ENCODE measurements at regions of chr4 and their contacts with region 1.

Region 1: GRCh38 chr4:185471235-185472102 is at the start of gene CCDC110:
- DNase-seq: peak; percentile 94
- H3K4me3 Mint-ChIP-seq: peak within 1 kb of the TSS; percentile 77
- H3K27ac Mint-ChIP-seq: no peak within 1 kb of the TSS
- H3K4me1 Mint-ChIP-seq: peaks cover 4% of the 10 kb centered on the region
- H3K27me3 Mint-ChIP-seq: peaks cover 9% of the 10 kb centered on the region
- total RNA-seq, gene CCDC110: 0.10 to 0.26 TPM

Region 2: GRCh38 chr4:185209031-185209851 is 262.2 kb before region 1 on chr4 and contains the start of gene SNX25:
- CTCF ChIA-PET with region 1: interaction called, 3 read pairs
- POLR2A ChIA-PET with region 1: no interaction called
- intact Hi-C with region 1: loop called (anchors 1 kb)
- DNase-seq: peak; percentile 91
- H3K4me3 Mint-ChIP-seq: peak within 1 kb of the TSS; percentile 88
- H3K27ac Mint-ChIP-seq: peak within 1 kb of the TSS; percentile 72
- H3K4me1 Mint-ChIP-seq: peaks cover 46% of the 10 kb centered on the region
- H3K27me3 Mint-ChIP-seq: no peaks in the 10 kb centered on the region
- total RNA-seq, gene SNX25: 18.9 to 21.6 TPM

Region 3: GRCh38 chr4:185254434-185254833 is 217.0 kb before region 1 on chr4:
- CTCF ChIA-PET with region 1: no interaction called
- POLR2A ChIA-PET with region 1: no interaction called
- intact Hi-C with region 1: loop called (anchors 5 kb)
- DNase-seq: no peak
- H3K4me3 Mint-ChIP-seq: peak overlapping the region; percentile 20
- H3K27ac Mint-ChIP-seq: peak overlapping the region; percentile 61
- H3K4me1 Mint-ChIP-seq: peaks cover 59% of the 10 kb centered on the region
- H3K27me3 Mint-ChIP-seq: no peaks in the 10 kb centered on the region

Region 4: DNA sequence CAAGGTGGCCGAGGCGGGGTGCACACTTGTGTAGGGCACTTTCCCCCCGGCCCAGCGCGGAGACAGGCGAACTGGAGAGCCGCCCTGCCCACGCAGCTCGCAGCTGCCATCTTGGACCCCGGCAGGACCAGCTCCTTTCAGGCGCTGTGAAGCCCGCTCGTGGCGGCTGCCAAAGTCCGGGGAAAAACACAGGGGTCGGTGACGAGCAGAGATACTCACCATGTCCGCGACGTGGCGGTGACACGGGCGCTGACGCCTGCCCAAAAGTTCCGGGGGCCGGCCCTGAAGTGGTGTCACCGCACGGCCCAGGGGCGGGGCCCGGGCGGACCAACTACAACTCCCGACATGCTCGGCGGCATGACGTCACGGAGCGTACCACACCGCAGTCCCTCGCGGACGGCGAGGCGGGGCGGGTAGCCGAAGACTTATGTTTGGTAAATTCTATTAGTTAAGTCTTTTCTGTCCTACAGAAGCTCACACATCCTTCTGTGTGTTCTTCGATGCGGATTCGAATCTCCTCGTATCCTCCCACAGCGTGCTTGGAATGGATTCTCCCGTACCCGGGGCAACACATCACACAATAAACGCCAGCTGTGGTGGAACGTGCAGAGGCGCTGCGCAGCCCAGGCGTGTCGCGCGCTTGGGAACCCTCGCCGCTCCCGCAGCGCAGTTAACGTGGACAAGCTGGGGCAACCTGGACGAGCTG is 45.7 kb before region 1 on chr4 and contains the start of gene UFSP2:
- CTCF ChIA-PET with region 1: no interaction called
- POLR2A ChIA-PET with region 1: interaction called, 3 read pairs
- intact Hi-C with region 1: loop called (anchors 1 kb)
- DNase-seq: peak; percentile 90
- H3K4me3 Mint-ChIP-seq: peak within 1 kb of the TSS; percentile 83
- H3K27ac Mint-ChIP-seq: peak within 1 kb of the TSS; percentile 97
- H3K4me1 Mint-ChIP-seq: peaks cover 23% of the 10 kb centered on the region
- H3K27me3 Mint-ChIP-seq: no peaks in the 10 kb centered on the region
- total RNA-seq, gene UFSP2: 28.3 to 33.0 TPM

Region 5: GRCh38 chr4:185504098-185505047 is 32.9 kb after region 1 on chr4:
- CTCF ChIA-PET with region 1: no interaction called
- POLR2A ChIA-PET with region 1: no interaction called
- intact Hi-C with region 1: no loop called
- DNase-seq: no peak
- H3K4me3 Mint-ChIP-seq: no peak overlapping the region
- H3K27ac Mint-ChIP-seq: no peak overlapping the region
- H3K4me1 Mint-ChIP-seq: no peaks in the 10 kb centered on the region
- H3K27me3 Mint-ChIP-seq: peaks cover 14% of the 10 kb centered on the region

Region 6: DNA sequence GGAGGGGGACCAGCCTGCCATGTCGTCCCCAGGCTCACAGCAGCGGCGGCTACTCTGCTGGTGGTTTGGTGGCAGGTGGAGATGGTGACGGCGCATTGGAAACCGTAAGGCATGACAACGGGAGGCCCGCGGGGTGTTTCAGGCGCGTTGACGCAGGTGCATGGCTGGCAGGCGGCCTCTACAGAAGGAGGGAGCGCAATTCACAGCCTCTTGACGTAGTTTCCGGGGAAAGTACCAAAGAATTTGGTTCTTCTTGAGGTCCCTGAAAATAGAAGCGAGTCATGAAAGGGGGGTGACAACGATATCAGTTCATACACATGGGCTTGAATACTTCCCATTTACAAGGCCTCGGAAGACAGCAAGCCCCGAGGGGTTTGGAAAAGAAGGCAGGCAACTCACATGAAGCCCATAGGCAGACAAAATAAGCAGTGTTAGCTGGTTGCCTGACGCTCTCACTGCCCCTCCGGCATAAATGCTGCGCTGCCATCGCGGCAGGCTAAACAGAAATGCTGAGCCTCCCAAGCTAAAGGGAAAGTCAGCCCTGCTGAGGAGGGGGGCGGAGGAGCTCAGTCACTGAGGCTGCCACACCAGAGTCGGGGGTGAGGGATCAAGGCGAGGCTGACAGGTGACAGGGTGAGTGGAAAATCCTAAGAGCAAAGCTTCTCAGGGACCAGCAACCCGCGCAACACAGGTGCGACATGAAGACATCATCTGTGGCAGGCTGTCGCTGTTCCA is 116.1 kb after region 1 on chr4:
- CTCF ChIA-PET with region 1: no interaction called
- POLR2A ChIA-PET with region 1: no interaction called
- intact Hi-C with region 1: loop called (anchors 2 kb)
- DNase-seq: peak; percentile 87
- H3K4me3 Mint-ChIP-seq: peak overlapping the region; percentile 34
- H3K27ac Mint-ChIP-seq: peak overlapping the region; percentile 40
- H3K4me1 Mint-ChIP-seq: peaks cover 16% of the 10 kb centered on the region
- H3K27me3 Mint-ChIP-seq: peaks cover 41% of the 10 kb centered on the region

Region 7: DNA sequence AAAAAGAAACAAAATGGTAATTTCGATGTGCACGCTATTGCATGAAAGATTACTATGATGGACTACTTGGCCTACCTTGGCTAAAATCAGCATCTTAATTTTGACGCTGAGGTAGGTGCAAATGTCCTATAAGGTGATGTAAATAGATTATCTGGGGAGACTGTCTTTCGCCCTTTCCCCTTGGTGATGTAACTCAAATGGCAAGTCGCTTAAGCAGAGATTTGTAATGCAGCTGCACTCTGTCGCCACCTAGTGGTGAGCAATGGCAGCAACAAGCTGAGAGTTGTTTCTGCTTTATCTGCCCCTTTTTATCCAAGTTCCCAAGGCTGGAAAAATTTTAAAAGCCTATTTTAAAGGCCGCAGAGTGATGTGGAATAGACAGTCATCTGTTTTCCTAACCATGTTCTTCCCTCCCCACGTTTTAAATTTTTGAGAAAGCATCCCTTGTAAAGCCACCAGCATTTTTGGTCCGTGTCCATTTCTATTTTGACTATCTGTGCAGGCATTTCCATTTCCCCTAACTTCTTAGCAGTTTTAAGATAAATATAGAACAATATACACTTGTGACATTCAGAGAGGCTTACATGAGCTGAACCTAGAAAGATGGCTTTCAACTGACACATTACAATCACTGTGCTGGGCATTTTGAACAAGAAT is 126.2 kb after region 1 on chr4:
- CTCF ChIA-PET with region 1: interaction called, 5 read pairs
- POLR2A ChIA-PET with region 1: no interaction called
- intact Hi-C with region 1: loop called (anchors 1 kb)
- DNase-seq: peak; percentile 78
- H3K4me3 Mint-ChIP-seq: no peak overlapping the region
- H3K27ac Mint-ChIP-seq: no peak overlapping the region
- H3K4me1 Mint-ChIP-seq: peaks cover 2% of the 10 kb centered on the region
- H3K27me3 Mint-ChIP-seq: peaks cover 19% of the 10 kb centered on the region

Region 8: DNA sequence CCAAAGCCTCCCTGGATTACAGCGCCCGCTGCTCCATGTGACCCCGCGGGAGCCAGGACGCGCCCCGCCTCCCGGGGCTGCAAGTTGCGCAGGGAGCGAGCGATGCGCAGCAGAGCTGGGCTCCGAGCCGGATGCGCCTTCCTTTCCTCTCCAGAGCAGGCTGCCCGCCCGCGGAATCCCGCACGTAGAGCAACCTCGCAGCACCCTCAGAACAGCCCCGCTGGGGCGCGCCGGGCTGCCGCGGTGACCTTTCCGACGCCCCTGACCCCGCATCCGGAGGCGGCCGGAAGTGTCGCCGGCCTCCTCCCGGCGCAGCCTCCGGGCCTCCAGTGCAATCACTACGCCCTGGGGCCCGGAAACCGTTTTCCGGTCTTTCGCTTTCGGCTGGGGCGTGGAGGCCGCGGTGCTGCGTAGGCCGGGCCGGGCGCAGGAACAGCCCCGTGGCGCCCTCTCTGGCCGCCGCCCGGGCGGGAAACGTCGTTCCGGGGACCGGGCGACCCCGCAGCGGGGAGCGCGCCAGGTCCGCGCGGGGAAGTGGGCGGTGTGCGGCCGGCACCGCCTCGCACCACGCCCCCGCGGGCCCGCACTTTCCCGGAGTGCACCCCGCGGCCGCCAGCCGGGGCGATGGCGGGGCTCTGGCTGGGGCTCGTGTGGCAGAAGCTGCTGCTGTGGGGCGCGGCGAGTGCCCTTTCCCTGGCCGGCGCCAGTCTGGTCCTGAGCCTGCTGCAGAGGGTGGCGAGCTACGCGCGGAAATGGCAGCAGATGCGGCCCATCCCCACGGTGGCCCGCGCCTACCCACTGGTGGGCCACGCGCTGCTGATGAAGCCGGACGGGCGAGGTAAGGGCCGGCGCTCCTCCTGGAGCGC is 720.0 kb after region 1 on chr4 and contains the start of gene CYP4V2:
- CTCF ChIA-PET with region 1: no interaction called
- POLR2A ChIA-PET with region 1: no interaction called
- intact Hi-C with region 1: loop called (anchors 2 kb)
- DNase-seq: peak; percentile 90
- H3K4me3 Mint-ChIP-seq: peak within 1 kb of the TSS; percentile 93
- H3K27ac Mint-ChIP-seq: peak within 1 kb of the TSS; percentile 92
- H3K4me1 Mint-ChIP-seq: peaks cover 34% of the 10 kb centered on the region
- H3K27me3 Mint-ChIP-seq: no peaks in the 10 kb centered on the region
- total RNA-seq, gene CYP4V2: 4.9 to 5.2 TPM